HEK293T (cell line): ENCODE measurements at regions of chr22 and their contacts with region 1.

Region 1: DNA sequence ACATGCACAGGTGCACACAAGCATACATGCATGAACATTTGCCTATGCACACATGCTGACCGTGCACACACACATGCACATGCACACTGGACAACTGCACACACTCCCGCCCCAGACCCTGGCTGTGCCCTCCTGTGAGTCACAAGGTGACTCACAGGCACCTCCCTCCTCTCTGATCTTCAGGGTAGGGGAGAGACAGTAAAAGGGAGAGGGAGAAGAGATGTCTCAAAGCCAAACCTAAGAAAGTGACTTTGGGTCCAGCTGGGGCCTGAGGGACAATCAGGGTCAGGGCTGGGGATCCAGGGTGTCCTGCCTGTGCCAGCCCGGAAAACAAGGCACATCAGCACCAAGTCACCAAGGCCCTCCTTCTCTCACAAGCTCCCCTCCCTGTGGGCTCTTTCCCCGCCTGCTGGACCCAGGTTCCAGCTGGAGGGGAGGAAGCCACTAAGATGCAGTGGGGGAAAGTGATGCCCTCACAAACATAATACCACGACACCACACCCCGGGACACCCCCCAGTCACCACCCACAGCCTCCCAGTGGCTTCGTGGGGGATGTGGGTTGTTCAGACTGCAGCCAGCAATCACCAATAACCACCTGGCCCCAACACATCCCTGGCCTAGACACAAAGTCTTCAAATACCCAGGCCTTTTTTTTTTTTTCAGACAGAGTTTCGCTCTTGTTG is 39.3 kb downstream of the PDGFB start:
- DNase-seq: no peak

Region 2: DNA sequence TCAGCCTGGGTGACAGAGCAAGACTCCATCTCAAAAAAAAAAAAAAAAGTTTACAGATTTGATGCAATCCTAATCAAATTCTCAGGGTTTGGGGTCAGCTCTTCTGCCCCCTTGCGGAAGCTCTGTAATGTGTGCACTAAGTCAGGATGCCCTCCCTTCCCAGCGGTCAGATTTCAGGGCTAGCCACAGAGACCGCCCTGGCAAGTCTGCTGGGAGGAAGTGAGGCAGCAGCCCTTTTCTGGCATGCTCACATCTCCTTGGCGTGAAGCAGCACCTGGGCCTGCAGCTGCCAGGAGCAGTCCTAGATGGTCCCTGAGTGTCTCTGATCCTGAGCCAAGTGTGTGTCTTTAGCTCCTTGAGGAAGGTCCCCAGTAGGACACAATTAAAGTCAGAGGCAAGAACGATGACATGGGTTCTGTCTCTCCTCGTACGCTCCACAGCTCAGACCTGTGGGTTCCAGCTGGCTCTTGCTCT is 202.3 kb before region 1 on chr22:
- CTCF ChIA-PET with region 1: no interaction called
- POLR2A ChIA-PET with region 1: no interaction called
- DNase-seq: peak; percentile 88

Region 3: GRCh38 chr22:39166547-39166946 is 38.9 kb before region 1 on chr22:
- CTCF ChIA-PET with region 1: no interaction called
- POLR2A ChIA-PET with region 1: no interaction called
- DNase-seq: no peak

Region 4: GRCh38 chr22:39215426-39216120 is 10.1 kb after region 1 on chr22:
- CTCF ChIA-PET with region 1: interaction called, 10 read pairs
- POLR2A ChIA-PET with region 1: no interaction called
- DNase-seq: peak; percentile 71

Region 5: GRCh38 chr22:39229688-39230260 is 24.3 kb after region 1 on chr22:
- CTCF ChIA-PET with region 1: no interaction called
- POLR2A ChIA-PET with region 1: no interaction called
- DNase-seq: no peak